ENCODE measurements at regions of chr1 and their contacts with region 1.

Region 1: DNA sequence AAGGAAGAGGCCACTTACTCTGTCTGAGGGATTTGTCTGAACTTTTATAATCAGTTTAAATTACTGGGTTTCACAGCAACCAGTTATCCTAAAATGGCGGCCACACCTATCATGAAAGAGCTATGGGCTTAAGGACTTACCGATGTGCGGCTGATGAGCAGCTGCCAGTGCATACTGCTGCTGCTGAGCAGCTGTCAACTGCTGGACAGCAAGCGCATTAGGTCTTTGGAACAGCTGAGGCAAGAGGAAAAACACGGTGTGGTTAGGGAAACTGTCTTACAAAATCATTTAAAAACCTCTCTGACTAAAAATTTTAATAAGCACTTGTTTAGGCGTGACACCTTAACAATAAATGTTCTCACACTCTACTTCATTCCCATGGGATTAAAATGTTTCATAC is 72.6 kb upstream of the SDC3 start:
- DNase-seq: no peak
- ATAC-seq: no peak
- H3K4me3 Mint-ChIP-seq: no peak overlapping the region
- H3K27ac Mint-ChIP-seq: no peak overlapping the region
- H3K4me1 Mint-ChIP-seq: peaks cover 53% of the 10 kb centered on the region
- H3K27me3 Mint-ChIP-seq: no peaks in the 10 kb centered on the region
- CTCF ChIP-seq: no peak

Region 2: DNA sequence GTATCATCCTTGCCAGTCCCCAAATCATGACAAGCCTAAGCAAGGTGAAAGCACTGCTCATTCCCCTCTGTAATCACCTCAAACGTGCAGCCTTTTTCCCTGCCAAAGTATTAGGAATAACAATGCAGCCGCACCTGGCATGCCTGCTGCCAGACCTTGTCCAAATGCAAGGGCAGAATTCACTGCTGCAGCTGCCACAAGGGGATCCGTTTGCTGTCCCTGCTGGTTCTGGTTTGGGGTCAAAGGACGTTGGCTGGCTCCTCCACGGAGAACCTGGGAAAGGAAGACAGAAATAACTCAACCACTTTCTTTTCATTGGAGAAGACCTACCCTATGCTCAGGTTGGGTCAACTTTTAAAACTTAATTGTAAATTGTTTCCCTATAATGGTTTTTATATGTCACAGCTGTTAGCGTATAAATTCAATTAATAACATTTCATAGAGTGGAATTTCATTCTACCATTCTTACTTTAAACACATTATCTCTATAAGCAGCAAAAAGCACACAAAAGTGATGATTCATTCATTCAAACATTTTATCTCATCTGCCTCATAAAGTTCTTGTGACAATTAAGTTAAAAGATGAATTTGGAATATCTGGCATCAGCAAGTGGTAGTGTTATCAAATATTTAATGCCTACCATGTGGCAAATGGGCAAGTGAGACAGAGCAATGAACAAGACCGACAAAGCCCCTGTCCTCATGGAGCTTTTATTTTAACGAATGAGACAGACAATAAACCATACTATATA is 12.8 kb before region 1 on chr1:
- CTCF ChIA-PET with region 1: no interaction called
- POLR2A ChIA-PET with region 1: interaction called, 15 read pairs
- intact Hi-C with region 1: no loop called
- DNase-seq: no peak
- ATAC-seq: no peak
- H3K4me3 Mint-ChIP-seq: no peak overlapping the region
- H3K27ac Mint-ChIP-seq: no peak overlapping the region
- H3K4me1 Mint-ChIP-seq: peaks cover 20% of the 10 kb centered on the region
- H3K27me3 Mint-ChIP-seq: no peaks in the 10 kb centered on the region
- CTCF ChIP-seq: no peak

Region 3: GRCh38 chr1:30998887-30999286 is 17.7 kb after region 1 on chr1:
- CTCF ChIA-PET with region 1: no interaction called
- POLR2A ChIA-PET with region 1: no interaction called
- intact Hi-C with region 1: no loop called
- DNase-seq: no peak
- ATAC-seq: no peak
- H3K4me3 Mint-ChIP-seq: no peak overlapping the region
- H3K27ac Mint-ChIP-seq: no peak overlapping the region
- H3K4me1 Mint-ChIP-seq: peaks cover 23% of the 10 kb centered on the region
- H3K27me3 Mint-ChIP-seq: no peaks in the 10 kb centered on the region
- CTCF ChIP-seq: no peak